Heart right ventricle (tissue), 16 donors: ENCODE measurements at regions of chr12 and their contacts with region 1.

Region 1: GRCh38 chr12:48814262-48815125 is 3.8 kb upstream of the CACNB3 start:
- DNase-seq: peak; percentile 74 to 89
- ATAC-seq: peak; percentile 84 to 91 (median 88)
- H3K4me3 ChIP-seq: peak overlapping the region; percentile 47 to 98 (median 86)
- H3K27ac ChIP-seq: peak overlapping the region; percentile 56 to 96 (median 92)
- H3K4me1 ChIP-seq: peaks cover 11 to 52% (median 42%) of the 10 kb centered on the region in 9 donors
- H3K27me3 ChIP-seq: peaks cover 0 to 33% (median 0%) of the 10 kb centered on the region in 7 donors
- CTCF ChIP-seq: peak in 8 of 9 donors; percentile 97 to 100 (median 98)

Region 2: DNA sequence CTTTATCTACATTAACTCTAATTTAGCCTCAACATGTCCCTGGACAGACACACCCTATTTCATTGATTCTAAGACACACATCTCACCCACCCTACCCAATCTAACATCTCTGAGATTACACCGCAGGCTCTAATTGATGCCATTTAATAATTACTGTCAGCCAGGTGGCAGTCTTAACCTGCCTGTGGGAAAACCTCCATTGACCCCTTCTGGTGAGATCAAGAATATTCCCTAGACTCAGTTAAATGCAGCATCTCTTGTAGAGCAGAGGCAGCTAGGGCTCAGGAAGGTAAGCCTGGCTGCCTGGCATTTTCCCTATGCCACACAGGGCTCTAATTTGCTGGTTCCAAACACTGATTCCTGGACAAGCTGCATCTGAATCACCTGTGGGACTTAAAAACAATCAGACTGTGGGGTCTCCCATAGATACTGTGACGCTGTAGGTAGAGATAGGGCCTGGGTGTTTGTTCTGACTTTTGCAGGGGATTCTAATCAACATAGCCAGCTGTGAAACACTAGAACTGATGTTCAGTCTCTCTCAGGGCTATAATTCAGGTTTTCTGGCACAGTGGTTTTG is 739.1 kb after region 1 on chr12:
- intact Hi-C with region 1: loop called in 1 of 10 experiments (anchors 5 kb)
- DNase-seq: no peak
- ATAC-seq: peak in 1 of 8 donors; percentile 15
- H3K4me3 ChIP-seq: no peak overlapping the region
- H3K27ac ChIP-seq: peak overlapping the region in 1 of 10 donors; percentile 35
- H3K4me1 ChIP-seq: peaks cover 0 to 30% (median 19%) of the 10 kb centered on the region in 9 donors
- H3K27me3 ChIP-seq: peaks cover 0 to 21% (median 1%) of the 10 kb centered on the region in 7 donors
- CTCF ChIP-seq: peak in 7 of 9 donors; percentile 31 to 56 (median 45)